ENCODE measurements at regions of chr6 and their contacts with region 1.

Region 1: DNA sequence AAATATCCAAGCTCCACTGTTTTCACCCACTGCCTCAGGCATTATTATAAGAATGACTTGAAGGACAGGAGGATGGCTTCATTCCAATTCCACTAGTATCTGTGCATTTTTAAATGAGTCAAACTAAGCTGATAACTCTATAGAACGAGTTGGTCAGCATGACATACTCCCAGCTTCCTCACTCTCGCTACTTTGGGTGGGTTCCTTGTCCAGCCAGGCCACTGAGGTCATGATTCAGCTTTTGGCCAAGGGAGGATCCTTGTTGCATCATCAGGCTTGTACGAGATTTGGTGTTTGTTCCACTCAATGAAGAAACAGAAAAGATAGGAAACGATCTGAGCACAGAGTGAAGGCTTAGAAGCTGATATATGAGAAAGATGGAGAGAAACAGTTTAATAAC is 19.8 kb downstream of the NEDD9 start:
- DNase-seq: no peak

Region 2: GRCh38 chr6:10694302-10695085 is 518.1 kb before region 1 on chr6 and contains the starts of genes C6orf52 and PAK1IP1:
- in situ Hi-C with region 1: no loop called
- DNase-seq: peak; percentile 98
- total RNA-seq, gene C6orf52: 0.63 and 0.85 TPM in 2 replicates
- total RNA-seq, gene PAK1IP1: 60.4 and 74.8 TPM in 2 replicates

Region 3: GRCh38 chr6:11085758-11086435 is 126.7 kb before region 1 on chr6:
- in situ Hi-C with region 1: no loop called
- DNase-seq: peak; percentile 75

Region 4: DNA sequence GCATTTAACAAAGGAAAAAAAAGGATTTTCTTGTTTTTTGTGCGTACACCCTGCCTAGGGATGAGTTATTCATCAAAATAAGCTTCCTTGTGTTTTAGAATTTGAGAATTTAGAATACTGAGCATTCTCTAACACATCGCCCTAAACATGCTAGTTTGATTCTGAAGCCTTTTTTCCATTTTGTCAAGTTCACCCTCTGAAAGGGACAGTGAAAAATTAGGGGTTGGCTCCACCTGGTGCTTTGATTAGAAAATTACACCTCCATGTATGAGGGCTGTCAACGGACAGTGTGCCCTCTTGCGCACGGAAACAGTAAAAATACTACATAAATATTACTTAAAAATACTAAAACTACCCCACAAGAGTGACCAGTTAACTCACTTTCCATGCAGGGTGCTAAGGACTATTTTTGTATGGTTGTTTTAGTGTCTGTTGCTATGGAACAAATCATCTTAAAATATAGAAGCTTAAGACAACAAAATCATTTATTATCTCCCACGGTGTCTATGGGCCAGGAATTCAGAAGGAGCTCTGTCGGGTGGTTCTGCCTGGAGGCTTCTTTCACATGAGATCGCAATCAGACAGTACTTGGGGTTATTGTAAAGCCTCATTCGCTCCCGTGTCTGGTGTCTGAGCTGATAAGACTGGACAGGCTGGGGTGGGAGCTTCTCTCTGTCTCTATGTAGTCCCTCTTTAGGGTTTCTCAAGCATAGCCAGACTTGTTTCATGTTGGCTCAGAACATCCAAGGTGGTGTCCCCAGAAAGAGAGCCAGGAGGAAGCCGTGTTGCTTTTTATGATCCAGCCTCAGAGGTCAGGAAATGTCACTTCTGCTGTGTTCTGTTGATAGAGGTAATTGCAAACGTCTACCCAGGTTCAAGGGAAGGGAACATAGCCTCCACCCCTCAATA is 283.8 kb after region 1 on chr6:
- in situ Hi-C with region 1: loop called (anchors 10 kb)
- DNase-seq: peak; percentile 94

Measured in SK-MEL-5 (cell line).